ENCODE measurements at regions of chr12 and their contacts with region 1.

Region 1: GRCh38 chr12:56299853-56300643 is at the start of gene CS:
- DNase-seq: peak; percentile 98
- H3K4me3 Mint-ChIP-seq: peak within 1 kb of the TSS; percentile 98
- H3K27ac Mint-ChIP-seq: peak within 1 kb of the TSS; percentile 90
- H3K4me1 Mint-ChIP-seq: peaks cover 51% of the 10 kb centered on the region
- H3K27me3 Mint-ChIP-seq: no peaks in the 10 kb centered on the region
- total RNA-seq, gene CS: 269 and 280 TPM in 2 replicates

Region 2: GRCh38 chr12:56041552-56042429 is 258.3 kb before region 1 on chr12 and contains the start of gene RPS26:
- intact Hi-C with region 1: no loop called
- DNase-seq: peak; percentile 90
- H3K4me3 Mint-ChIP-seq: peak within 1 kb of the TSS; percentile 97
- H3K27ac Mint-ChIP-seq: peak within 1 kb of the TSS; percentile 97
- H3K4me1 Mint-ChIP-seq: peaks cover 49% of the 10 kb centered on the region
- H3K27me3 Mint-ChIP-seq: no peaks in the 10 kb centered on the region
- total RNA-seq, gene RPS26: 35.4 and 38.2 TPM in 2 replicates

Region 3: DNA sequence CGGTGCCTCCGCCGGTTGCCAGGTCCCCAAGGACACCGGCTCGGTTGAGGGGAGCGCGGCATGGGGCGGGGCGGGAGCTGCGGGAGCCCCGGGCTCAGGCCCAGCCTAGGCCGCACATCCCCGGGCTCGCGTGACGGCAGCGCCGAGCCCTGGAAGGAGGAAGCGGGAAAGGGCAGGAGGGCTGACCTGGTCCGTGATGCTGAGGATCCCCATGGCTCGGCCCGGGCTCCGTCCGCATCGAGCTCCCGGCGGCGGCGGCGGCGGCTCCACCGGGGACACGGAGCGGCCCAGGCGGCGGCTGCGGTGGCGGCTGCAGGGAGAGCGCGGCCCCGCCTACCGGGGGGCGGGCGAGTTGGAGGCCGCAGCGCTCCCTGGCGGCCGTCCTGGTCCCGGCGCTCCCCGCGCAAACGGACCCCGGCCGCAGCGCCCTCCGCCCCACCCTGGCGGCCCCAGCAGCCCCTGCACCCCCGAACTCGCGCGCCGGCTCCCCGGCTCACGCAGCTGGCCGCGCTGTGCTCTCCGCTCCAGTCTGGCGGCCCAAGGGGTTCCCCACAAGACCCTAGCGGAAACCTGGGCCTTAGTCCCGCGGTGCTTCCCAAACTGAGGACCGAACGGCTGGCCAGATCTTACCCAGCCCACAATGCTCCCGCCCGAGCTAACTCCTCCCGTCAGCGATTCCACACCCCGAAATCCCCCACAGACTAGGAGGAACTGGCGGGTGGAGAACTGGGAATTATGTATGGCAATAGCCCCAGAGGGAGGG is 41.8 kb before region 1 on chr12 and contains the start of gene ANKRD52:
- intact Hi-C with region 1: loop called (anchors 1 kb)
- DNase-seq: peak; percentile 82
- H3K4me3 Mint-ChIP-seq: peak within 1 kb of the TSS; percentile 90
- H3K27ac Mint-ChIP-seq: peak within 1 kb of the TSS; percentile 83
- H3K4me1 Mint-ChIP-seq: peaks cover 22% of the 10 kb centered on the region
- H3K27me3 Mint-ChIP-seq: no peaks in the 10 kb centered on the region
- total RNA-seq, gene ANKRD52: 71.0 and 83.9 TPM in 2 replicates

Region 4: DNA sequence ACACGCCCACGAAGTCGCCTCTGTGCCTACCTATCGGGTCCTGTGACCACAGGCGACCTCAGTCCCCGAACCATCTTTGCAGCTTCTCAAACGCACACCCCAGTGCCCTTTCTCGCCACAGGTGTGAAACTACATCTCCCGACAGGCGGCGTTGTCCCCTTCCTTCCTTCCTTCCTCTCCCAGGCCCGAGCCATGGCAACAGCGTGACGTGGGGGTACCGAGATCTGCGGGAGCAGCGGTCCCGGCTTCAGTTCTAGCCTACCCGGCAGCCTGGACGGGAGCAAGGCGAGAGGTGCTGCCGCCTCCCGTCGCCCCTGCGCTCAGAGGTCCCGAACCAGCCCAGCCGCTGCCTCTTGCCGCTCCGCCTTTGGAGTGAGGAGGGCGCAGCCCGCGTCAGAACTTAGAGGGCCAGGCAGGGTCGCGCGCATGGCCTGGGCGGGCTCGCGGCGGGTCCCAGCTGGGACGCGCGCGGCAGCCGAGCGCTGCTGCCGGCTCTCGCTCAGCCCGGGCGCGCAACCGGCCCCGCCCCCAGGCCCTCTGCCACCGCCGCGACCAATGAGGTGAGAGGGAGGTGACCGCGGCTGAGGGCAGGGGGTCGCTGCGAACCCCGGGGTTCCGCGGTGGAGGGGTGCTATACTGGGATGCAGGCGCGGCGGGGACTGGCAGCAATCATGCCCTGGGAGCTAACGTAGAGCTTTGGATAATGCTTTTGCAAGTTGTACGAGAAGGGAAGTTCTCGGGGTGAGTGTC is 33.2 kb before region 1 on chr12 and contains the start of gene COQ10A:
- intact Hi-C with region 1: loop called (anchors 1 kb)
- DNase-seq: peak; percentile 84
- H3K4me3 Mint-ChIP-seq: peak within 1 kb of the TSS; percentile 96
- H3K27ac Mint-ChIP-seq: peak within 1 kb of the TSS; percentile 87
- H3K4me1 Mint-ChIP-seq: peaks cover 15% of the 10 kb centered on the region
- H3K27me3 Mint-ChIP-seq: no peaks in the 10 kb centered on the region
- total RNA-seq, gene COQ10A: 17.8 and 18.0 TPM in 2 replicates

Region 5: DNA sequence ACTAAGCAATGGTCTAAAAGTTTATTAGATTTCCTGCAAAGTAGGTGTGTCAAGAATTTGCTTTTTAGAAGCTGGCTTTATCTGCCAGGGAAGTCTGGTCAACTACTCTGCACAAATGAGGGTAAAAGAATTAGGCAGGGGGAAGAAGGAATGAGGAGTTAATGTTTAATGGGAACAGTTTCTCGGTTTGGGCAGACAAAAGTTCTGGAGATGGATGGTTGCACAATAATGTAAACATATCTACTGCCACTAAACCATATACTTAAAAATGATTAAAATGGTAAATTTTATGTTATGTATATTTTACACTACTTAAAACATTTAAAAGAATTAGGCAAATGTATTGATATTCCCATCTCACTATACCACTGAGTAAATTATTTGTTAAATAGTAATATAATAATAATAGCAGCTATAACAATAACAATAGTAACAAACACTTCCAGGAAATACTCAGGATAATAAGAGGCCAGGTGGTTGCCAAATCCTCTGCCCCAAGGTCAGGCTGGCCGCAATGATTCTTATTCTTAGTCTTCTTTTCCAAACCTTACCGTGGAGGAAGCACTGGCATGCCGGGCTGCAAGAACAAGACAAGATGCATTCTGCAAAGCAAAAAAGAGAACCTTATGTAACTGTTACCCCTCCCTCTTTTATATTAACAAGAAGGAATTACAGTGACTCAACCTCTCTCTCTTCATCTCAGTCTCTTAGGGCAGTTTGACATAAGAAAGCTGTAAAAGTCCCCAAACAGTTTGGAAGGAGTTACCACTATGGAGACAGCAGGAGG is 13.8 kb before region 1 on chr12:
- intact Hi-C with region 1: no loop called
- DNase-seq: no peak
- H3K4me3 Mint-ChIP-seq: no peak overlapping the region
- H3K27ac Mint-ChIP-seq: peak overlapping the region; percentile 62
- H3K4me1 Mint-ChIP-seq: peaks cover 15% of the 10 kb centered on the region
- H3K27me3 Mint-ChIP-seq: no peaks in the 10 kb centered on the region

Region 6: GRCh38 chr12:56315622-56316473 is 15.8 kb after region 1 on chr12 and contains the start of gene CNPY2:
- intact Hi-C with region 1: loop called (anchors 1 kb)
- DNase-seq: peak; percentile 83
- H3K4me3 Mint-ChIP-seq: peak within 1 kb of the TSS; percentile 98
- H3K27ac Mint-ChIP-seq: peak within 1 kb of the TSS; percentile 96
- H3K4me1 Mint-ChIP-seq: peaks cover 12% of the 10 kb centered on the region
- H3K27me3 Mint-ChIP-seq: no peaks in the 10 kb centered on the region
- total RNA-seq, gene CNPY2: 170 and 172 TPM in 2 replicates

Region 7: DNA sequence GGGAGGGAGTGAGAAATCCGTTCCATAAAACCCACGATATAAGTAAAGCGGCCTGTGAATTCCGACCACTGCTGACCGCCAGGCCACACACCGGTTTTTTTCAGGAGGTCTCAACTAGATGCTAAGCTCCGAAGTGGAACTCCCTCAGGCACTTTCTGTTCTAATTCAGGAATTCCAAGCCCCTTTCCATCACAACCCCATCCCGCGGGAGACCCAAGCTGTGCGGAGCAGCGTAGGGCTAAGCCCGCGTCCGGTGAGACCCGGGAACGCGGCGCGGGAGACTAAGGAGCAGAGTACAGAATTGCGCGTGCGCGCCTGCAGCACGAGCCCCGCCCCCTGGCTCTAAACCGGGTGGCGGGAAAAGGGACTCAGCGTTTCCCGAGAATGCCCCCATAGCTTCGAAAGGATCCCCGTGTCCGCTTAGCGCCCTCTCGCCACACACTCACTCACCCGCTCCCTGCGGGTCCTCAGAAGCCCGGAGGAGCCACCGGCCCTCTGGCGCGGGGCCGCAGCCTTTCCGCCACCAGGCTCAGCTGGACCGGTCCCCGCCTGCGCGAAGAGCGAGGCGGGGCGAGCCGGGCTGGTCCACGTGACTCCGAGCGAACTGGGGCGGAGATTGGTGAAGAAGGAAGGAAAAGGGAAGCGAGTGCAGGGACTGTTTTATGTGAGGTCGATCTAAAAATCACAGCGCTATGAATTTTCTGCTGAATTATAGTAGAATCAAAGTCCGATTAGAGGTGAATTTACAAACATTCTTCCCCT is 149.0 kb after region 1 on chr12 and contains the start of gene TIMELESS:
- intact Hi-C with region 1: loop called (anchors 1 kb)
- DNase-seq: peak; percentile 87
- H3K4me3 Mint-ChIP-seq: peak within 1 kb of the TSS; percentile 92
- H3K27ac Mint-ChIP-seq: peak within 1 kb of the TSS; percentile 85
- H3K4me1 Mint-ChIP-seq: peaks cover 27% of the 10 kb centered on the region
- H3K27me3 Mint-ChIP-seq: no peaks in the 10 kb centered on the region
- total RNA-seq, gene TIMELESS: 44.9 and 45.8 TPM in 2 replicates

Region 8: DNA sequence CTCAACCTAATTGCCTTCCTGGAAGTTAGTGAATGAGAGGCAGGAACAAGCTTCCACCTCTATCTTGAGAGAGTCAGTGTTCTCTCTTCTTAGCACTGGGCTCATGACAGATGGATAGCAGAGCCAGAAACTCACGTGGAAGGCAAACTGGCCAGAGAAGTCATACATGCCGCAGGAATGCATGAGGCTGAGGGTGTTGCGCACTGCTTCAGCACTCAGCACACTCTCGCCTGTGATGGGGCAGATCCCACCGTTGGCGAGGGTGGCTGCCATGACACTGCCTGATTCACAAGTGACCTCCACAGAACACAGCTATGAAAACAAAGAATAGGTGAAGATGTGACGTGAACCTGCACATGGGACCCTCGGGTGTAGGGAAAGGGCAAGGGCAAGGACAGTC is 174.4 kb after region 1 on chr12:
- intact Hi-C with region 1: no loop called
- DNase-seq: no peak
- H3K4me3 Mint-ChIP-seq: no peak overlapping the region
- H3K27ac Mint-ChIP-seq: no peak overlapping the region
- H3K4me1 Mint-ChIP-seq: peaks cover 8% of the 10 kb centered on the region
- H3K27me3 Mint-ChIP-seq: no peaks in the 10 kb centered on the region

Region 9: DNA sequence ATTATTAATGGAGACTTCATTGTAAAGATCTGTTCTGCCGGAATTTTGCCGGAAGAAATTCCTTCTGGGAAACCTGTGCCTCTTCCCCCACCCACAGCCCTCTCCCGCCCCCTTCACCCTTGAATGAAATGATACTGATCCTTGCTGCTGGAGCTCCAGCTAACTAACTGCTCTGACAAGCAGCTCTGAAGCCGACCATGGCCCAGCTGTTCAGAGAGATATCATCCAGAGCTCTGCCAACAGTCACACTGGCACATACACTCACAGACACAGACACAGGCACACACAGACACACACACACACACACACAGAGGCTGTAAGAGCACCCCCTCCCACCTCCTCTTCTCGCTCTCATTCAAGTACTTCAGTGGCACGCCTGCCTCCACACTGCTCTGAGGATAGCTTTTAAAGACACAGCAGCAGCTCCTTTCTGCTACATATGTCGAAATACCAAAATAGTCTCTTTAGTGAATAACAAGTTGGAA is 1042.2 kb after region 1 on chr12:
- intact Hi-C with region 1: no loop called
- DNase-seq: no peak
- H3K4me3 Mint-ChIP-seq: no peak overlapping the region
- H3K27ac Mint-ChIP-seq: no peak overlapping the region
- H3K4me1 Mint-ChIP-seq: peaks cover 7% of the 10 kb centered on the region
- H3K27me3 Mint-ChIP-seq: no peaks in the 10 kb centered on the region

Measured in activated T-helper 1 cell treated with anti-CD3 and anti-CD28 coated beads, Interleukin-12 subunit alpha, Interleukin-12 subunit beta, Interleukin-2, Interleukin-4 antibody, amounts not matched to agents 30 ng/mL and 10 ng/mL and 1 ng/mL, durations not matched to agents 14 hours and 24 hours and 36 hours (primary cell).